Activated naive CD4-positive, alpha-beta T cell treated with anti-CD3 and anti-CD28 coated beads, Interleukin-2, amount 10 ng/mL, durations not matched to agents 7 days and 5 days (primary cell): ENCODE measurements at regions of chr6 and their contacts with region 1.

Region 1: GRCh38 chr6:108052706-108053105 is 21.8 kb downstream of the OSTM1 start:
- DNase-seq: no peak
- H3K4me3 Mint-ChIP-seq: no peak overlapping the region
- H3K27ac Mint-ChIP-seq: no peak overlapping the region
- H3K4me1 Mint-ChIP-seq: no peaks in the 10 kb centered on the region
- H3K27me3 Mint-ChIP-seq: no peaks in the 10 kb centered on the region

Region 2: GRCh38 chr6:107981695-107982094 is 71.0 kb before region 1 on chr6:
- CTCF ChIA-PET with region 1: interaction called, 25 read pairs
- DNase-seq: no peak
- H3K4me3 Mint-ChIP-seq: no peak overlapping the region
- H3K27ac Mint-ChIP-seq: no peak overlapping the region
- H3K4me1 Mint-ChIP-seq: peaks cover 3% of the 10 kb centered on the region
- H3K27me3 Mint-ChIP-seq: peaks cover 10% of the 10 kb centered on the region